H1 (cell line): ENCODE measurements at regions of chr17 and their contacts with region 1.

Region 1: DNA sequence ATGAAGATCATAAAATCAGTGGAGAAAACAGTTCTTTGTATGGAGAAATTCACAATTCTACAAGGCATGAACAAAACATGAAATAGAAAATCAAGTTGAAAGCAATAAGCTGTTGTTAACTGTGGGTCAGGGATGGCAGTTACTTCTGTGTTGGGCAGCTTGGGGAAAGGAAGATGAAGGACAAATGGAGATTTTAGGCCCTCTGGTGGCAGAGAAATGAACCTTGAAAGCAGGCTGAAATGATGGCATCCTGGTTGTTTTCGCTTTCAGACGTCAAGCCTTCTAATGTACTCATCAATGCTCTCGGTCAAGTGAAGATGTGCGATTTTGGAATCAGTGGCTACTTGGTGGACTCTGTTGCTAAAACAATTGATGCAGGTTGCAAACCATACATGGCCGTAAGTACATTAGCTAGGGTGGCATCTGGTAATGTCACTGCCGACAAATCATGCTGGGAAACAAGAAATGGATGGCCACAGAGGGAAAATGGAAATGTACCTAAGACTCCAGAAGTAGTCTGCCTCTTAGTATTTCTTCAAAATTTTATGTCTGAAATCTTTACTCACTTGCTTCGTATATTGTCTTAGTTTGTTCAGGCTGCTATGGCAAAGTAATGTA is 108.9 kb downstream of the MAP2K6 start:
- DNase-seq: peak in 1 of 2 experiments; percentile 21
- H3K4me3 ChIP-seq: no peak overlapping the region
- H3K27ac ChIP-seq: no peak overlapping the region
- H3K4me1 ChIP-seq: no peaks in the 10 kb centered on the region
- H3K27me3 ChIP-seq: no peaks in the 10 kb centered on the region
- CTCF ChIP-seq: peak; percentile 10 to 89 (median 72)
- EP300 ChIP-seq: no peak
- POLR2A ChIP-seq: no peak
- RAD21 ChIP-seq: peak; percentile 84 to 85

Region 2: GRCh38 chr17:69335058-69335457 is 188.3 kb before region 1 on chr17:
- CTCF ChIA-PET with region 1: interaction called, 57 read pairs
- POLR2A ChIA-PET with region 1: no interaction called
- DNase-seq: no peak
- H3K4me3 ChIP-seq: no peak overlapping the region
- H3K27ac ChIP-seq: no peak overlapping the region
- H3K4me1 ChIP-seq: no peaks in the 10 kb centered on the region
- H3K27me3 ChIP-seq: no peaks in the 10 kb centered on the region
- CTCF ChIP-seq: peak in 2 of 3 experiments; percentile 48 to 55; a peak in 2 of 4 replicates
- EP300 ChIP-seq: no peak
- POLR2A ChIP-seq: no peak
- RAD21 ChIP-seq: peak; percentile 70 to 73

Region 3: DNA sequence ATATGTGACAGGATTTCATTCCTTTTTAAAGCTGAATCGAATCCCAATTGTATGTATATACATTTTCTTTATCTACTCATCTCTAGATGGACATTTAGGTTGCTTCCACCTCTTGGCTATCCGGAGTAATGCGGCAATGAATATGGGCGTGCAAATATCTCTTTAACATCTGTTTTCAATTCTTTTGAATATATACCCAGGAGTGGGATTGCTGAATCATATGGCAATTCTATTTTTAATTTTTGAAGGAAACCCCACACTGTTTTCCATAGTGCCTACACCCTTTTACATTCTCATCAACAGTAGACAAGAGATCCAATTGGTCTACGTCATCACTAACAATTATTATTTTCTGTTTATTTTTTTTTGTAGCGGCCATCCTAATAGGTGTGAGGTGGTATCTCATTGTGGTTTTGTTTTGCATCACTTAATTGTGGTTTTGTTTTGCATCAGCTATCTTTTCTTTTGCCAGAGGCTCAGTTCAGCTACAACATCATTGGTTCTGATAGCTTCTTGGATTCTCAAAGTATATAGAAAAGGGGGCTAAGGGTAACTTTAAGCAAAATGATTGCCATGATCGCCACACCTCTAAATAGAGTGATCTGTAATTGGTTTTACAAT is 134.4 kb before region 1 on chr17:
- CTCF ChIA-PET with region 1: interaction called, 43 read pairs
- POLR2A ChIA-PET with region 1: no interaction called
- DNase-seq: no peak
- H3K4me3 ChIP-seq: no peak overlapping the region
- H3K27ac ChIP-seq: no peak overlapping the region
- H3K4me1 ChIP-seq: no peaks in the 10 kb centered on the region
- H3K27me3 ChIP-seq: no peaks in the 10 kb centered on the region
- CTCF ChIP-seq: no peak
- EP300 ChIP-seq: no peak
- POLR2A ChIP-seq: no peak
- RAD21 ChIP-seq: no peak

Region 4: GRCh38 chr17:69430488-69430887 is 92.9 kb before region 1 on chr17:
- CTCF ChIA-PET with region 1: interaction called, 12 read pairs
- POLR2A ChIA-PET with region 1: no interaction called
- DNase-seq: no peak
- H3K4me3 ChIP-seq: no peak overlapping the region
- H3K27ac ChIP-seq: peak overlapping the region; percentile 34; the same call in 1 of the 2 replicates
- H3K4me1 ChIP-seq: peaks cover 3 to 17% (median 12%) of the 10 kb centered on the region in 4 experiments
- H3K27me3 ChIP-seq: no peaks in the 10 kb centered on the region
- CTCF ChIP-seq: no peak
- EP300 ChIP-seq: no peak
- POLR2A ChIP-seq: no peak
- RAD21 ChIP-seq: no peak

Region 5: DNA sequence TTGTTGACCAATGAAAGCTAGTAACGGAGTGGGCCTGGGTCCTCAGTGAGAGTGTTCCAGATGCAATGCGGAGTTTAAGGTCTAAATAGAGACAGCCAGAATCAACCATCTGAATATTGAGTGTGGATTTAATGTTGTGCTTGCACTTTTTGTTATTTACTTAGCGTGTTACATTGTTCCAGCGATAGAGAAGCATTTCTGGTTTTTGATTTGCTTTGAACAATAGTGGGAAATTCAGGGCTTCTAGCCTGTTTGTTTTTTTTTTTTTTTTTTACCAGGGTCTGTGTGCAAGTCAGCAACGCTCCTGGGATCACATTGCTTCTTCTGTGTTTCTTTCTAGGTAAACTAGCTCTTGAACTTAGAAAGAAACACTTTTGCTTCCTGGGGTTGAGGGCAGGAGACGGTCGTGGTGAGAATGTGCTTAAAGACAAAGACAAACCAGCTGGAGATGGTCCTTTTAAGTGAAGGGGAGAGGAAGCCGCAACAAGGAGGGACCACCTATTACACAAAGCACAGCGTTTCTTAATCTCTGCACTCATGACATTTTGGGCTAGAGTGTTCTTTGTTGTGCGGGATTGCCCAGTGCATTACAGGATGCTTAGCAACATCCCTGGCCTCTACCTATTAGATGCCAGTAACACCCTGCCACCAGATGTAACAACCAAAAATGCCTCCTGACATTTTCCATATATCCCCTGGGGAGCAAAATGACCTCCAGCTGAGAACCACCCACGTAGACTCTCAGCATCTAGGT is 10.3 kb after region 1 on chr17:
- CTCF ChIA-PET with region 1: interaction called, 28 read pairs
- POLR2A ChIA-PET with region 1: no interaction called
- DNase-seq: peak in 1 of 2 experiments; percentile 29
- H3K4me3 ChIP-seq: no peak overlapping the region
- H3K27ac ChIP-seq: no peak overlapping the region
- H3K4me1 ChIP-seq: peaks cover 2 to 14% (median 7%) of the 10 kb centered on the region in 4 experiments; a peak in 6 of 7 replicates
- H3K27me3 ChIP-seq: no peaks in the 10 kb centered on the region
- CTCF ChIP-seq: no peak
- EP300 ChIP-seq: no peak
- POLR2A ChIP-seq: no peak
- RAD21 ChIP-seq: no peak

Region 6: DNA sequence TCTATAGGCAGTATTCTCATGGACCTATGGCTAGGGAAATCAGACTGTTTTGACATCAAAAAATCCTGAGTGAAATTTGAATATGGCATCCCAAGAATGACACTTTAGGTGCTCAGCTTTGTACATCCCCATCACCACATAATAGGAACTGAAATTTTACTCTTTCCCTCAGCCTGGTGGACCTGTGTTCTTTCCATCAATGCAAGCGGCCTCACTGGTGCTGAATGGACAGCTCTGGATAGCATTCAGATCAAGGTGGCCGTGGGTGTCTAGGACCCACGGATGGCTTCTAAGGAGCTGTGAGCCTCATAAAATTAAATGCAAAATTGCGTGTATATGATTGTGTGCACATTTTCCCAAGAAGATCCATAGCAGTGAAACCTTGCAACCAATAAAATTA is 43.8 kb after region 1 on chr17:
- CTCF ChIA-PET with region 1: interaction called, 13 read pairs
- POLR2A ChIA-PET with region 1: no interaction called
- DNase-seq: no peak
- H3K4me3 ChIP-seq: no peak overlapping the region
- H3K27ac ChIP-seq: no peak overlapping the region
- H3K4me1 ChIP-seq: no peaks in the 10 kb centered on the region
- H3K27me3 ChIP-seq: no peaks in the 10 kb centered on the region
- CTCF ChIP-seq: no peak
- EP300 ChIP-seq: no peak
- POLR2A ChIP-seq: no peak
- RAD21 ChIP-seq: no peak